CD14-positive monocyte (primary cell): ENCODE measurements at regions of chr2 and their contacts with region 1.

Region 1: GRCh38 chr2:46461011-46461674 is 18.2 kb upstream of the TMEM247 start:
- DNase-seq: peak; percentile 65 to 72 (median 68)
- H3K4me3 ChIP-seq: peak overlapping the region; percentile 6 to 71 (median 42)
- H3K4me3 Mint-ChIP-seq: peak overlapping the region; percentile 67 to 92
- H3K27ac ChIP-seq: peak overlapping the region; percentile 73 to 93
- H3K27ac Mint-ChIP-seq: peak overlapping the region; percentile 97 to 99 (median 98)
- H3K4me1 ChIP-seq: peaks cover 36 to 37% of the 10 kb centered on the region in 2 donors
- H3K4me1 Mint-ChIP-seq: peaks cover 39% of the 10 kb centered on the region
- H3K27me3 ChIP-seq: no peaks in the 10 kb centered on the region
- H3K27me3 Mint-ChIP-seq: peaks cover 0 to 1% (median 0%) of the 10 kb centered on the region in 3 donors
- CTCF ChIP-seq: peak; percentile 100

Region 2: DNA sequence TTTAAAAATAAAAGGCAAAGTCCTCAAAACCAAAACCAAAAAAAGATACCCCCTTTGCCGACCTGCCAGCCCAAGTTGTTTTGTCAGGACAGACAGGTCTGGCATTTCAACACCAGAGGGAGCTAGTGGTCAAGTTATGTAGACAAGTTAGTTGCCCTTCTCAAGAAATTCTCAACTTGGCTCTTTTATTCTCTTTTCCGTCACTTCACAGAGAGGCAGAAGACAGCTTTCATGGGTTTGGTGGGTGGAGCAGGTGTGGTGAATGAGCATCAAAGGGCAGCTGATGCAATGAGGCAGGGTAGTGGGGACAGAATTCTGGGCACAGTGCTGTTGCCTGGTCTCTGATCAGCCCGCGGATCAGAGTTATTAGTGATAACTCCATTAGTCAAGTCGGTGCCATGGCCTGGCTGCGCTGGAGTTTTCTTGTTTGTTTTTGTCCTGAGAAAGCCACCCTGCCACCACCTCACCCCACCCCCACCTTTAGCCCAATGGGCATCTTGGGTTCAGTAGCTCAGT is 467.6 kb before region 1 on chr2:
- intact Hi-C with region 1: loop called in 1 of 2 experiments (anchors 2 kb)
- DNase-seq: peak; percentile 51 to 65 (median 62)
- H3K4me3 ChIP-seq: no peak overlapping the region
- H3K4me3 Mint-ChIP-seq: no peak overlapping the region
- H3K27ac ChIP-seq: no peak overlapping the region
- H3K27ac Mint-ChIP-seq: peak overlapping the region in 1 of 7 donors; percentile 15
- H3K4me1 ChIP-seq: peaks cover 0 to 7% of the 10 kb centered on the region in 2 donors
- H3K4me1 Mint-ChIP-seq: peaks cover 14% of the 10 kb centered on the region
- H3K27me3 ChIP-seq: no peaks in the 10 kb centered on the region
- H3K27me3 Mint-ChIP-seq: no peaks in the 10 kb centered on the region
- CTCF ChIP-seq: peak; percentile 80

Region 3: GRCh38 chr2:46230115-46230571 is 231.0 kb before region 1 on chr2:
- intact Hi-C with region 1: no loop called
- DNase-seq: peak in 2 of 3 donors; percentile 24 to 33
- H3K4me3 ChIP-seq: no peak overlapping the region
- H3K4me3 Mint-ChIP-seq: no peak overlapping the region
- H3K27ac ChIP-seq: no peak overlapping the region
- H3K27ac Mint-ChIP-seq: peak overlapping the region in 3 of 7 donors; percentile 30 to 33 (median 31)
- H3K4me1 ChIP-seq: peaks cover 12 to 19% of the 10 kb centered on the region in 2 donors
- H3K4me1 Mint-ChIP-seq: peaks cover 16% of the 10 kb centered on the region
- H3K27me3 ChIP-seq: peaks cover 3 to 14% of the 10 kb centered on the region in 2 donors
- H3K27me3 Mint-ChIP-seq: peaks cover 18 to 36% (median 26%) of the 10 kb centered on the region in 3 donors
- CTCF ChIP-seq: peak; percentile 15